Activated T-helper 1 cell treated with anti-CD3 and anti-CD28 coated beads, Interleukin-12 subunit alpha, Interleukin-12 subunit beta, Interleukin-2, Interleukin-4 antibody, amounts not matched to agents 30 ng/mL and 10 ng/mL and 1 ng/mL, durations not matched to agents 14 hours and 24 hours and 36 hours (primary cell): ENCODE measurements at regions of chr1 and their contacts with region 1.

Region 1: GRCh38 chr1:27772933-27773825 is at the start of gene STX12:
- DNase-seq: peak; percentile 99
- H3K4me3 Mint-ChIP-seq: peak within 1 kb of the TSS; percentile 98
- H3K27ac Mint-ChIP-seq: peak within 1 kb of the TSS; percentile 98
- H3K4me1 Mint-ChIP-seq: peaks cover 31% of the 10 kb centered on the region
- H3K27me3 Mint-ChIP-seq: no peaks in the 10 kb centered on the region
- total RNA-seq, gene STX12: 22.0 and 23.9 TPM in 2 replicates

Region 2: GRCh38 chr1:27154991-27155781 is 618.0 kb before region 1 on chr1 and contains the start of gene SLC9A1:
- intact Hi-C with region 1: loop called (anchors 5 kb)
- DNase-seq: peak; percentile 90
- H3K4me3 Mint-ChIP-seq: peak within 1 kb of the TSS; percentile 93
- H3K27ac Mint-ChIP-seq: peak within 1 kb of the TSS; percentile 93
- H3K4me1 Mint-ChIP-seq: peaks cover 47% of the 10 kb centered on the region
- H3K27me3 Mint-ChIP-seq: no peaks in the 10 kb centered on the region
- total RNA-seq, gene SLC9A1: 27.9 and 28.8 TPM in 2 replicates

Region 3: DNA sequence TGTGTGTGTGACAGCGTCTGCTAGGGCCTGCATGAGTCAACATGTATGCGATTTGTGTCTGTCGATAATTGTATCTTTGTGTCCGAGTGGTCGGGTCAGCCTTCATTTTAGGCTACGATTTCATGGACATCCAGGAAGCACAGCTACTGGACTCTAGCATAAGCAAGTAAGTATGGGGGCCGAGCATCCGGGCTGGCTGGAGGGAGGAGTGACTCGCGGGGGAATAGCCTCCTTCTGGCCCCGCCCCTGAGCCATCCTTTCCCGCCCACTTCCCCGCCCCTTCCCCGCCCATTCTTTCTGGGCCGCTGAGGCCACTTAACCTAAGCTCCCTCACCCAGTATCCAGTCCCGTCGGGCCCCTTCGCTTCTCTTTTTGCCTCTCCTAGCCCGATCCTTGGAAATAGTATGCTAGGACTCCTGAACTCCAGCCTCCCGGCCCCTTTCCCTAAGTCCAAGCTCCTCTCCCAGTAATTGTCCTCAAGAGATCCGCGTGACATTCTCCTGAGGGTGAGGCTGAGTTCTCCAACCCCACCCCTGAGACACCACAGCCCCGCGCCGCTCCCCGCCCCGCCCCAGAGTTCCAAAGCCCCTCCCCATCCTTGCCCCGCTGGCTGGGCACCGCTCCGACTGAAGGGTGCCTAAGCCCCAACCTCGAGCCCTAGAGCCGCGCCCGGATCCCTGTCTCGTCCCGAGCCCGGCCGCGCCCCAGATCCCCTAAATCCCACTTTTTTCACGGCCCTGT is 407.6 kb before region 1 on chr1:
- intact Hi-C with region 1: loop called (anchors 2 kb)
- DNase-seq: peak; percentile 60
- H3K4me3 Mint-ChIP-seq: peak overlapping the region; percentile 90
- H3K27ac Mint-ChIP-seq: peak overlapping the region; percentile 86
- H3K4me1 Mint-ChIP-seq: peaks cover 38% of the 10 kb centered on the region
- H3K27me3 Mint-ChIP-seq: no peaks in the 10 kb centered on the region

Region 4: GRCh38 chr1:27671964-27672749 is 101.0 kb before region 1 on chr1 and contains the start of gene IFI6:
- intact Hi-C with region 1: loop called (anchors 1 kb)
- DNase-seq: peak; percentile 84
- H3K4me3 Mint-ChIP-seq: peak within 1 kb of the TSS; percentile 94
- H3K27ac Mint-ChIP-seq: peak within 1 kb of the TSS; percentile 90
- H3K4me1 Mint-ChIP-seq: peaks cover 40% of the 10 kb centered on the region
- H3K27me3 Mint-ChIP-seq: no peaks in the 10 kb centered on the region
- total RNA-seq, gene IFI6: 71.7 and 85.6 TPM in 2 replicates

Region 5: DNA sequence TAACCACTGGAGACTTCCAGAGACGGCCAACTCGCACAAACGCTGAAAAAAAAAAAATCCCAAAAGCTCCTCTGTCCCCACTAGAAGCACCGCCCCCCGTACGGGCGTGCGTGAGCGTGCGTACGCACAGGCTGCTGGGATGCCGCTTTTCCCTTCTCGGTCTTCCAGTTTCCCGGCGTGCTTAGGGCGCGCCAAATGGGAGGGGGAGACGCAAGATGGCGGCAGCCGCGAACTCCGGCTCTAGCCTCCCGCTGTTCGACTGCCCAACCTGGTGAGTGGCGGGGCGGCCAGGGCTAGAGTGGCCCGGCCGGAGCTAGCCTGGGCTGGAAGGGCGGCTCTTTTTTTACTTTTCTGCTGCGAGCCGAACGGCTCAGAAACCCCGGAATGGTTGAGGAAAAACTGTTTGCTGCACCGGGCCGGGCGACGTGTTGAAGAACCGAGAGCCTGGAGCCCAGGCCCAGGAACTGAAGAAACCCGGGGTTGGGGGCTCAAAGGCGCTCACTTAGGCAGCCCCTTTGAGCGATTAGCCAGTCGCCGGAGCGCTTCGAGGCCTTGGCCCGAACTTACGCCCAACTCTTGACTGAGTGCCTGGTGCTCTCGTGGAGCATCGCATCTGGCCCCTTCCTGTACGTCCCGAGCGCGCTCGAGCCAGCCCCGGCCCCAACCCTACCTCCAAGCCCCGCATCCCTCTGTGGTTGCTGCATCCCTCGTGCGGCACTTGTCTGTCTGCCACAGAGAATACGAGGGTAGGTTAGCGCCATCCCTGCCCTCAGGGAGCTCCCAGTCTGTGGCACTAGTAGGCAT is 57.6 kb after region 1 on chr1 and contains the start of gene PPP1R8:
- intact Hi-C with region 1: loop called (anchors 1 kb)
- DNase-seq: peak; percentile 86
- H3K4me3 Mint-ChIP-seq: peak within 1 kb of the TSS; percentile 93
- H3K27ac Mint-ChIP-seq: peak within 1 kb of the TSS; percentile 84
- H3K4me1 Mint-ChIP-seq: peaks cover 17% of the 10 kb centered on the region
- H3K27me3 Mint-ChIP-seq: no peaks in the 10 kb centered on the region
- total RNA-seq, gene PPP1R8: 84.1 and 88.1 TPM in 2 replicates

Region 6: DNA sequence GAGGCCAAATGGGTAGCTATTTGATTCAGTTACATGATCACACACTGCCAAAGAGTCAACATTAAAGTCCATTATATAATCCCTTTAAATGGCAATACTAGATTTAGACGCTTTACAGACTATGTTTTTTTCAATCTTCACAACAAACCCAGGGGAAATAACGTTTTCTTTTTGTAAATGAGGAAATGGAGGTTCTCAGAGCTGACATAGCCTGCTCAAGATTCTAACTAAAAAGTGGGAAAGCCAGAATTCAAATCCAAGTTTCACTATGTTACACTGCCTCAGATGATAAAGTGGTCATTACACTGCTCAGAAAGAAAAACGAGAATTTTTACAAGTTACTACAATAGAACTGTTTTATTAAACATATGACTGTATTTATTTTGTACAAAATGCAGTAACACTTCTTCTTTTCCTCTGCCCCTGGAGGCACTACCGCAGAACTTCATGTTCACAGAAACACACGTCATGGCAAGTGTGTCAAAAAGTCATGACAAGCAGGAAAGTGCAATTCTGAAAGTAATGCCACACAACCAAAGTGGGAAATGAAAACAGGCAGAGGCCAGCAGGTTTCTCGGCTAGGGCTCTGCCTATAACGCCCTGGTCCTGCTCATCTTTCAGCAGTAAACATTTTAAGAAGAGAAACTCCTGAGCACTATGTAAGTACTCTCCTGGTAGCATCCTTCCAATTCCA is 118.2 kb after region 1 on chr1:
- intact Hi-C with region 1: loop called (anchors 5 kb)
- DNase-seq: peak; percentile 62
- H3K4me3 Mint-ChIP-seq: peak overlapping the region; percentile 63
- H3K27ac Mint-ChIP-seq: peak overlapping the region; percentile 95
- H3K4me1 Mint-ChIP-seq: peaks cover 66% of the 10 kb centered on the region
- H3K27me3 Mint-ChIP-seq: no peaks in the 10 kb centered on the region